Transverse colon (tissue), 4 donors: ENCODE measurements at regions of chr12 and their contacts with region 1.

Region 1: GRCh38 chr12:9707864-9708808 is 24.8 kb downstream of the CLECL1 start:
- DNase-seq: peak; percentile 62
- H3K4me3 ChIP-seq: no peak overlapping the region
- H3K27ac ChIP-seq: peak overlapping the region in 1 of 4 donors; percentile 47
- H3K4me1 ChIP-seq: peaks cover 0 to 9% (median 1%) of the 10 kb centered on the region in 4 donors
- H3K27me3 ChIP-seq: no peaks in the 10 kb centered on the region
- CTCF ChIP-seq: peak; percentile 72 to 84 (median 79)
- EP300 ChIP-seq: no peak
- POLR2A ChIP-seq: no peak

Region 2: DNA sequence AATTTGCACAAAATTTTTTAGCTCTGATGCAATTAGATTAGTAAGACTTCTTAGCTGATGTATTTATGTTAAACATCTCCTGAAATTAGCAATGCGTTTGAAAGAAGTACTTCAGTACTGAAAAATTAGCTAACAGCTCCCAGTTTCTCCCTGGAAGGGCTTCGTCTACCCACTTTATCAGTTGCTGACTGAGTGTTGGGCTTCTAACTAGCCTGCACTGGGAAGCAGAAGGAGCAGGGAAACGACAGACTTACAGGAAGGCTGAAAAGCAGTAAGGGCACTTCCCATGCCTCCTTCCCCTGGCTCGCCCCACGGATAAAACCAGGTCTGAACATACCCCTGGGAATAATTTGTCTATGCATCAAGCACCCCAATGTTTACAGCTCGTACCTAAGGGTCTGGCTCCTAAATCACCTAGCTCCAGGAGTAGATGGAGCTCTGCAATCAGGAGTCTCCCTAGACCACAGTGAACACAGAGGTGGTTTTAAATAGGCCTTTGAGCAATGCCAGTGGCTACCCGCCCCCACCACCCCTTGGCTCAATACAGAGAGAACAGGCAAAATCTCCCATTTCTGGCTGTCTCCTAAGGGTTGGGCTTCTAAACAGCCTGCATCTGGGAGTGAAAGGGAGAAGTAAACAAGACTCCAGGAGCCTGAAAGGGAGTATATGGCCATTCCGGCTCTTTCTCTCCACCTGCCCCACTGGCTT is 616.1 kb before region 1 on chr12:
- in situ Hi-C with region 1: no loop called
- intact Hi-C with region 1: no loop called
- DNase-seq: no peak
- H3K4me3 ChIP-seq: no peak overlapping the region
- H3K27ac ChIP-seq: no peak overlapping the region
- H3K4me1 ChIP-seq: no peaks in the 10 kb centered on the region
- H3K27me3 ChIP-seq: no peaks in the 10 kb centered on the region
- CTCF ChIP-seq: no peak
- EP300 ChIP-seq: no peak
- POLR2A ChIP-seq: no peak

Region 3: GRCh38 chr12:9634177-9634803 is 73.8 kb before region 1 on chr12:
- in situ Hi-C with region 1: loop called in 2 of 4 experiments (anchors 10 kb)
- intact Hi-C with region 1: no loop called
- DNase-seq: peak; percentile 73
- H3K4me3 ChIP-seq: no peak overlapping the region
- H3K27ac ChIP-seq: no peak overlapping the region
- H3K4me1 ChIP-seq: no peaks in the 10 kb centered on the region
- H3K27me3 ChIP-seq: no peaks in the 10 kb centered on the region
- CTCF ChIP-seq: peak; percentile 59 to 65 (median 61)
- EP300 ChIP-seq: no peak
- POLR2A ChIP-seq: no peak